A549 (cell line): ENCODE measurements at regions of chr15 and their contacts with region 1.

Region 1: GRCh38 chr15:44606740-44607139 is 56.7 kb downstream of the SPG11 start:
- DNase-seq: no peak
- ATAC-seq: no peak
- H3K4me3 ChIP-seq: no peak overlapping the region
- H3K27ac ChIP-seq: no peak overlapping the region
- H3K4me1 ChIP-seq: no peaks in the 10 kb centered on the region
- CTCF ChIP-seq: no peak
- EP300 ChIP-seq: no peak
- POLR2A ChIP-seq: no peak
- RAD21 ChIP-seq: no peak

Region 2: GRCh38 chr15:44243829-44244228 is 362.9 kb before region 1 on chr15:
- CTCF ChIA-PET with region 1: no interaction called
- POLR2A ChIA-PET with region 1: no interaction called
- DNase-seq: no peak
- ATAC-seq: no peak
- H3K4me3 ChIP-seq: no peak overlapping the region
- H3K27ac ChIP-seq: no peak overlapping the region
- H3K4me1 ChIP-seq: no peaks in the 10 kb centered on the region
- CTCF ChIP-seq: no peak
- EP300 ChIP-seq: no peak
- POLR2A ChIP-seq: no peak
- RAD21 ChIP-seq: peak in 1 of 2 experiments; percentile 30; a peak in 1 of 5 replicates

Region 3: DNA sequence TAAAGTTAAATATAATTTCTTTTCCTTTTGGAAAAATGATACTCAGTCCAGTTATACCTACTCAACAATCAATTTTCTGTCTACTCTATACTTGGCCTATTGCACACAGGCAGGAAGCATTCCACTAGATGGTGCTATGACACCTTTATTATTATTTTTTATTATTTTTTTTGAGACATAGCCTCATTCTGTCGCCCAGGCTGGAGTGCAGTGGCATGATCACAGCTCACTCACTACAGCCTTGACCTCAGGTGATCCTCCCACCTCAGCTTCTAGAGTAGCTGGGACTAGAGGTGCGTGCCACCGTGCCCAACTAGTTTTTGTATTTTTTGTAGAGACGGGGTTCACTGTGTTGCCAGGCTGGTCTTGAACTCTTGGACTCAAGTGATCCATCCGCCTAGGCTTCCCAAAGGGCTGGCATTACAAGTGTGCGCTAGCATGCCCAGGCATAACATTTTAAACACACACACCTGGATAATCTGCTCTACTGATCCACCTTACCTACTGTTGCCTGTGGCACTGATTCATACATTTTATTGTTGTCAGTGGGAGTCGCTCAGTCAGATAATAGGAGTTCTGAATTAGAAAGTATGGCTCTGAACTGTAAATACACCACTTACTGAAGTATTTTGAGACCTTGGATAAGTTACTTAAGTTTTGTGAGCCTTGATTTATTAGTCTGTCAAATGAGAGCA is 13.6 kb before region 1 on chr15:
- CTCF ChIA-PET with region 1: interaction called, 4 read pairs
- POLR2A ChIA-PET with region 1: interaction called, 10 read pairs
- DNase-seq: peak in 1 of 2 experiments; percentile 11
- ATAC-seq: peak in 1 of 2 experiments; percentile 78; a peak in 3 of 6 replicates
- H3K4me3 ChIP-seq: no peak overlapping the region
- H3K27ac ChIP-seq: no peak overlapping the region
- H3K4me1 ChIP-seq: no peaks in the 10 kb centered on the region
- CTCF ChIP-seq: peak; percentile 37
- EP300 ChIP-seq: no peak
- POLR2A ChIP-seq: no peak
- RAD21 ChIP-seq: peak; percentile 11 to 23; a peak in 1 of 5 replicates